ENCODE measurements at regions of chr17 and their contacts with region 1.

Region 1: GRCh38 chr17:43846221-43846712 is 709 bp upstream of the CD300LG start:
- DNase-seq: no peak
- ATAC-seq: peak; percentile 99
- H3K4me3 ChIP-seq: no peak overlapping the region
- H3K27ac ChIP-seq: no peak overlapping the region
- H3K4me1 ChIP-seq: no peaks in the 10 kb centered on the region
- H3K27me3 ChIP-seq: no peaks in the 10 kb centered on the region
- CTCF ChIP-seq: peak; percentile 89 to 99 (median 97); a peak in 5 of 6 replicates
- EP300 ChIP-seq: no peak
- POLR2A ChIP-seq: no peak
- RAD21 ChIP-seq: peak; percentile 67

Region 2: DNA sequence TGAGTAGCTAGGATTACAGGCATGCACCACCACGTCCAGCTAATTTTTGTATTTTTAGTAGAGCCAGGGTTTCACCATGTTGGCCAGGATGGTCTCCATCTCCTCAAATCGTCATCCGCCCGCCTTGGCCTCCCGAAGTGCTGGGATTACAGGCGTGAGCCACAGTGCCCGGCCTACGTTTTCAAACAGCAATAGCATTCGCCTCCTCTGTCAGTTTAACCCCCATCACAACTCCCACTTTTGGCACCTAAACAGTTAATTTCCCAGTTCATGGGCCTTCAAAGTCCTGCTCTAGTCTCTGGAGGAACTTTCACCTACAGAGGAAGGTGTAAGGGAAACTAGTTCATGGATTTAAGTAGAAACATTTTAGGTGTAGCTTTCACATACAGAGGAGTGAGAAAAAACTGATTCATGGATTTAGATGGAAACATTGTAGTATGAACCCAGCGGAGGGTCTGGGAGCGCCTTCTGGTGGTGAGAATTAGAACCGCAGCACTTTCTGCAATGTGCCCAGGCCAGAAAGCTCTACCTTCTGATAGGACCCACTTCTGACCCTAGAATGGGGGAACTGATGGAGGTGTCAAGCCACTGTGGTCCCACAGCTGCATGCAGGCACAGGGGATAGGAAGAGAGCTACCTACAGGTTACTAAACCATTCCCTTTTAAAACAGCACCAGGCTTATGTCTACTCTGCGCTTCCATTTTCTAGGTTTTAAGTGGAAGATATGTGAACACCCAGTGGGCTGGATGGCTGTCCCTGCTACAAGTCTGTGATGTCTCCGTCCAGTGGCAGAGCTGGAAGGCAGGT is 172.5 kb before region 1 on chr17:
- CTCF ChIA-PET with region 1: no interaction called
- POLR2A ChIA-PET with region 1: no interaction called
- RAD21 ChIA-PET with region 1: no interaction called
- SMC1A ChIA-PET with region 1: no interaction called
- in situ Hi-C with region 1: no loop called
- intact Hi-C with region 1: no loop called
- DNase-seq: no peak
- ATAC-seq: peak; percentile 48
- H3K4me3 ChIP-seq: no peak overlapping the region
- H3K27ac ChIP-seq: no peak overlapping the region
- H3K4me1 ChIP-seq: peaks cover 42% of the 10 kb centered on the region
- H3K27me3 ChIP-seq: no peaks in the 10 kb centered on the region
- CTCF ChIP-seq: peak; percentile 92 to 97 (median 94)
- EP300 ChIP-seq: no peak
- POLR2A ChIP-seq: no peak
- RAD21 ChIP-seq: peak; percentile 76

Region 3: DNA sequence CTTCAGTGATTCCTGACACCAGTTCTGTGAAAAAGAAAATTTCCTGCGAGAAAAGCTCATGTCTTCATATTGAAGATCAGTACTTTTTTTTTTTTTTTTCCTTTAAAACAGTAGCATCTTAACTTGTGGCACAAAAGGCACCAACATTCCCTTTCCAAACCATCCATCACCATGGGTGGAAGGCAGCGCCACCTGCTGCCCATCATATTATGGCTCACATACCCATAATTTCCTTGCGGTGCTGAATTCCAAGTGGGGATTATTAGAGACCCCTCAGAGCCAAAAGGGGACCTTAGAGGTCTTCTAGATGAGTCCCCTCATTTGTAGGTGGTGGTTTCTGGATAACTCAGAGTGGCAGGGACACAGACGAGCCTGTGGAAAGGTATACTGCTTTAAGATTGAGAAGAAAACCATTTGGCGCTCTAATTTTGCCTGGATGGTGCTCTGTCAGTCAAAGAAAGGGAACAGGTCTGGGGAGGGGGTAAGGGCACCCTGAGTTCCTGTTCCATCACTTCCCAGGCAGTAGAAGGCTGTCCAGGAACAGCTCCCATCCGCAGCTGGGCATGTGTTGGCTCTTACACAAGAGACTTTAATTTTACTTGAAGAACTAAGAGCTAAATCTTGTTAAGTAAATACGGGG is 79.7 kb before region 1 on chr17:
- CTCF ChIA-PET with region 1: interaction called, 20 read pairs
- POLR2A ChIA-PET with region 1: no interaction called
- RAD21 ChIA-PET with region 1: no interaction called
- SMC1A ChIA-PET with region 1: interaction called, 3 read pairs
- in situ Hi-C with region 1: no loop called
- intact Hi-C with region 1: no loop called
- DNase-seq: no peak
- ATAC-seq: no peak
- H3K4me3 ChIP-seq: no peak overlapping the region
- H3K27ac ChIP-seq: no peak overlapping the region
- H3K4me1 ChIP-seq: peaks cover 7% of the 10 kb centered on the region
- H3K27me3 ChIP-seq: no peaks in the 10 kb centered on the region; a peak in 1 of 4 replicates
- CTCF ChIP-seq: peak; percentile 70 to 79 (median 78)
- EP300 ChIP-seq: no peak
- POLR2A ChIP-seq: no peak
- RAD21 ChIP-seq: peak; percentile 19; the same call in 1 of the 2 replicates

Region 4: GRCh38 chr17:43857942-43858600 is 11.8 kb after region 1 on chr17:
- CTCF ChIA-PET with region 1: interaction called, 15 read pairs
- POLR2A ChIA-PET with region 1: no interaction called
- RAD21 ChIA-PET with region 1: no interaction called
- SMC1A ChIA-PET with region 1: no interaction called
- in situ Hi-C with region 1: no loop called
- intact Hi-C with region 1: no loop called
- DNase-seq: no peak
- ATAC-seq: no peak
- H3K4me3 ChIP-seq: no peak overlapping the region
- H3K27ac ChIP-seq: no peak overlapping the region
- H3K4me1 ChIP-seq: no peaks in the 10 kb centered on the region
- H3K27me3 ChIP-seq: no peaks in the 10 kb centered on the region; a peak in 2 of 4 replicates
- CTCF ChIP-seq: no peak
- EP300 ChIP-seq: no peak
- POLR2A ChIP-seq: no peak
- RAD21 ChIP-seq: no peak

Region 5: DNA sequence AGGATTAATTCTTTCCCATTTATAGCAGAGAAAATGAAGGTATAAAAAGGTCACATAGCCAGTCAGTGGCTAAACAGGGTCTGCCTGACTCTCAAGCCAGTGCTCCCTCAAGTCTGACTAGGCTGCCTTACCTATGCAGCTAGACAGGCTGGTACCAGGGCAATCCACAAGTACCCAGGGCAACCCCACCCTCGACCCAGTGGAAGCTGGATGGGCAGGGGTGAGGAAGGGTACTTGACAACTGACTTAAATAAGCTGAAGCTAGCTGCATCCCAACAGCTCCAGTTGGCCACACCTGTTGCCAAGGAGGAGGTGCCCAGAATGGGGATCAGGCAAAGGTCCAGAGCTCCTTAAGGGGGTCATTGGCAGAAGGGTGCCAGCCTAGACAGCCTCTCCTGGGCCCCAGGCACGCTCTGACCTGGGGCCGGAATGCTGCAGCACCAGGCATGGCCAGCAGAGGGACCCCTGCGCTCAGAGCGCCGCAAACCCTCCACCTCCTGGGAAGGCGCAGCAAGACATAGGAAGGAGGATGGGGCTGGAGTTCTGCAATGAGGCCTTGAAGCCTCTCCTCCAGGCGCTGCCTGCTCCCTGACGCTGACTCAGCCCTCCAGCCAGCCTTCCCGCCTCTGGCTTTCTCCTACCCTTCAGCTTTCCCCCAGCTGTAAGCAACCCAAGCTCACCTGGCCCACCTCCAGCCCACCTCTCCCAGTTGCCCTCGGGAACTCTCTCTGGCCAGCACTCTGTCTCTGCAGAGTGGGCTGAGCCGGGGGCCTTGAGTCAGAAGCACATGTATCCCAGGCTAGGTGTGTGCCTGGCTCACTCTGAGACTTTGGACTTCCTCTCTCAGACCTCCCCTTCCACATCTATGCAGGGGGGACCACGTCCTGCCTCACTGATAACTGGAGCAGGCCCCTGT is 32.3 kb after region 1 on chr17:
- CTCF ChIA-PET with region 1: interaction called, 10 read pairs
- POLR2A ChIA-PET with region 1: no interaction called
- RAD21 ChIA-PET with region 1: no interaction called
- SMC1A ChIA-PET with region 1: no interaction called
- in situ Hi-C with region 1: no loop called
- intact Hi-C with region 1: no loop called
- DNase-seq: no peak
- ATAC-seq: peak; percentile 98
- H3K4me3 ChIP-seq: no peak overlapping the region
- H3K27ac ChIP-seq: no peak overlapping the region
- H3K4me1 ChIP-seq: no peaks in the 10 kb centered on the region
- H3K27me3 ChIP-seq: no peaks in the 10 kb centered on the region
- CTCF ChIP-seq: peak; percentile 84 to 99 (median 95)
- EP300 ChIP-seq: no peak
- POLR2A ChIP-seq: no peak
- RAD21 ChIP-seq: peak; percentile 63

Region 6: GRCh38 chr17:43958953-43959352 is 112.7 kb after region 1 on chr17:
- CTCF ChIA-PET with region 1: no interaction called
- POLR2A ChIA-PET with region 1: no interaction called
- RAD21 ChIA-PET with region 1: no interaction called
- SMC1A ChIA-PET with region 1: no interaction called
- in situ Hi-C with region 1: no loop called
- intact Hi-C with region 1: no loop called
- DNase-seq: no peak
- ATAC-seq: no peak
- H3K4me3 ChIP-seq: no peak overlapping the region
- H3K27ac ChIP-seq: no peak overlapping the region
- H3K4me1 ChIP-seq: no peaks in the 10 kb centered on the region
- H3K27me3 ChIP-seq: peaks cover 0 to 2% of the 10 kb centered on the region in 2 experiments; a peak in 2 of 4 replicates
- CTCF ChIP-seq: no peak
- EP300 ChIP-seq: no peak
- POLR2A ChIP-seq: no peak
- RAD21 ChIP-seq: no peak

Region 7: GRCh38 chr17:44247440-44247841 is 401.2 kb after region 1 on chr17:
- CTCF ChIA-PET with region 1: no interaction called
- POLR2A ChIA-PET with region 1: no interaction called
- RAD21 ChIA-PET with region 1: no interaction called
- SMC1A ChIA-PET with region 1: no interaction called
- in situ Hi-C with region 1: no loop called
- intact Hi-C with region 1: no loop called
- DNase-seq: no peak
- ATAC-seq: no peak
- H3K4me3 ChIP-seq: no peak overlapping the region
- H3K27ac ChIP-seq: no peak overlapping the region
- H3K4me1 ChIP-seq: peaks cover 36% of the 10 kb centered on the region
- H3K27me3 ChIP-seq: no peaks in the 10 kb centered on the region
- CTCF ChIP-seq: no peak
- EP300 ChIP-seq: no peak
- POLR2A ChIP-seq: no peak
- RAD21 ChIP-seq: no peak